Dorsolateral prefrontal cortex (tissue), 120 donors: ENCODE measurements at regions of chr18 and their contacts with region 1.

Region 1: DNA sequence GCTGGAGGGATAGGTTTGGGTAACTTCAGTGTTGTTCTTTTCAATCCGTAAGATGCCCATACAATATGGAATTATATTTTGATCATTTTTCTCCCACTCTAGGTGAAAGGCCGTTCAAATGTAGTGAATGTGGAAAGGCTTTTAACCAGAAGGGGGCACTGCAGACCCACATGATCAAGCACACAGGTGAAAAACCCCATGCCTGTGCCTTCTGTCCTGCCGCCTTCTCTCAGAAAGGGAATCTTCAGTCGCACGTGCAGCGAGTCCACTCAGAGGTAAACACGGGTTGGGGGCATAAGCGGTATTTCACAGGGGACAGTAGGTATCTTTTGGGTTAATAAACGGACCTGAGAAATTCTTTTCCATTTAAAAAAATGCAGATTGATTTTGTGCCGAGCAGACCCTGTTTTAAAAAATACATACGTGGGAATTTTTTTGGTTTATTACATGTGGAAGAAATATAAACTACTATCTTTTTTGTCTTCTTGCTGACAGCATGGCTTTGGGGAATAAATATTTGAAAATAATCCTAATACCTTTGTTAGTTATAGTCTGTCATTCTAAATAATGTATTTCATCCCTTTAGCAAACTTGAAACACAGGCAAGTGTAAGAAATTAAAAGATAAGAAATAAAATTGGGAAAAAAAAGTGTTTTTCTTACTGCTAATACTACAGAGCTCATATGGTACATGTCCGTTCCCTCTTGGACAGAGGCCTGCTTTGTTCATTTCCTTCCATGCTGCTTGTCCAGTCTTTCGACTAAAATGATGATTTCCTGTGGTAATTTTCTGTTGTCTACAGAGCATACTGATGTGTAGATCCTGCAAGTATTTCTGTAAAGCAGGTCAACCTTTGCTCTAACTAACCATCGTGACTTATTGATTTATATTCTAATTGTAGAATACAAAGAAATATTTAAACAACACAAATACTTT is 53.3 kb downstream of the ZNF236 start:
- DNase-seq: peak in 3 of 10 donors; percentile 36 to 66 (median 60)
- H3K4me3 ChIP-seq: peak overlapping the region in 5 of 59 donors; percentile 3 to 31 (median 18)
- H3K27ac ChIP-seq: peak overlapping the region in 5 of 59 donors; percentile 1 to 62 (median 35)
- H3K27me3 ChIP-seq: no peaks in the 10 kb centered on the region
- CTCF ChIP-seq: peak; percentile 55 to 81 (median 70)

Region 2: GRCh38 chr18:76914314-76914713 is 38.7 kb after region 1 on chr18:
- intact Hi-C with region 1: no loop called
- DNase-seq: no peak
- H3K4me3 ChIP-seq: no peak overlapping the region
- H3K27ac ChIP-seq: no peak overlapping the region
- H3K27me3 ChIP-seq: no peaks in the 10 kb centered on the region
- CTCF ChIP-seq: no peak

Region 3: GRCh38 chr18:76982841-76983587 is 107.4 kb after region 1 on chr18:
- intact Hi-C with region 1: loop called in 1 of 2 experiments (anchors 10 kb)
- DNase-seq: peak; percentile 77 to 88 (median 82)
- H3K4me3 ChIP-seq: peak overlapping the region in 12 of 59 donors; percentile 18 to 42 (median 34)
- H3K27ac ChIP-seq: peak overlapping the region in 40 of 59 donors; percentile 6 to 93 (median 62)
- H3K27me3 ChIP-seq: no peaks in the 10 kb centered on the region
- CTCF ChIP-seq: peak; percentile 79 to 96 (median 88)